Calu3 (cell line): ENCODE measurements at regions of chr10 and their contacts with region 1.

Region 1: GRCh38 chr10:27482984-27483956 is 20.8 kb upstream of the RAB18 start:
- DNase-seq: peak; percentile 17
- H3K4me3 Mint-ChIP-seq: peak overlapping the region; percentile 62
- H3K27ac Mint-ChIP-seq: peak overlapping the region; percentile 93
- H3K4me1 Mint-ChIP-seq: peaks cover 9% of the 10 kb centered on the region
- H3K27me3 Mint-ChIP-seq: no peaks in the 10 kb centered on the region
- CTCF ChIP-seq: no peak

Region 2: GRCh38 chr10:27504007-27504807 is 20.9 kb after region 1 on chr10 and contains the start of gene RAB18:
- CTCF ChIA-PET with region 1: interaction called, 12 read pairs
- intact Hi-C with region 1: no loop called
- DNase-seq: peak; percentile 95
- H3K4me3 Mint-ChIP-seq: peak within 1 kb of the TSS; percentile 92
- H3K27ac Mint-ChIP-seq: peak within 1 kb of the TSS; percentile 90
- H3K4me1 Mint-ChIP-seq: peaks cover 15% of the 10 kb centered on the region
- H3K27me3 Mint-ChIP-seq: no peaks in the 10 kb centered on the region
- CTCF ChIP-seq: no peak
- total RNA-seq, gene RAB18: 75.9 and 82.8 TPM in 2 replicates